Caco-2 (cell line): ENCODE measurements at regions of chr14 and their contacts with region 1.

Region 1: DNA sequence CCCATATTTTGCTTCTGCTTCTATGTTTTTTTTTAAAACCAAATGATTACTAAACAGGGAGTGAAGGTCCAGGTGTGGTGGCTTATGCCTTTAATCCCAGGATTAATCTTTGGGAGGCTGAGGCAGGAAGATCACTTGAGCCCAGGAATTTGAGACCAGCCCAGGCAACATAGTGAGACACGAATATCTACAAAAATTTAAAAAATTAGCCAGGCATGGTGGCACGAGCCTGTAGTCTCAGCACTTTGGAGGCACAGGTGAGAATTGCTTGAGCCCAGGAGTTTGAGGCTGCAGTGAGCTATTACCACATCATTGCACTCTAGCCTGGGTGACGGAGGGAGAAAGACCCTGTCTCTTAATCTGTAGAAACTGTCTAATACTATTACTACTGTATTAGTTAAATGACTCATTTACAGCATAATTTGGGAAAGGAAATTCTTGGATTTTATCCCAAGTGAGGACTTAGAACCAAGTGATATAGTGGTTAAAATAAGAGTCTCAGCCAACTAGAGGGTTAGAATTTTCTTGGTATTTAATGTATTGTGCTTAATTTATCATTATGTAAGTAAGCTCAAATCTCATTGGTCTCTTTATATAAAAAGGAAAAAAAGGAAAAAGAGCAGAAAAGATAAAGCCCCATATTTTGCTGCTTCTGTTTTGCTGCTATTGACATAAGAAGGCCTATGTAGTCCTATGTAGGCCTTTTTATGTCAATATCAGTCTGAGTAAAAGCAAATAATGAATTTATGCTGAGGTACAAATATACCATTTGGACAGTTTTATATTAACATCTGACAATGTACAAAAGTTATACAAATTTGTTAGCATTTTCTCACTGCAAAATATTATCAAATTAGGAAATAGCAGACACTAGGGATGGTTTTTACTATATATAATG is 163.4 kb downstream of the RAD51B start:
- DNase-seq: no peak
- H3K4me3 ChIP-seq: no peak overlapping the region
- H3K4me3 Mint-ChIP-seq: no peak overlapping the region
- H3K27ac Mint-ChIP-seq: no peak overlapping the region
- H3K4me1 ChIP-seq: peaks cover 11% of the 10 kb centered on the region
- H3K4me1 Mint-ChIP-seq: peaks cover 9% of the 10 kb centered on the region
- H3K27me3 ChIP-seq: no peaks in the 10 kb centered on the region
- H3K27me3 Mint-ChIP-seq: no peaks in the 10 kb centered on the region
- CTCF ChIP-seq: no peak

Region 2: GRCh38 chr14:67943947-67944346 is 39.0 kb before region 1 on chr14:
- CTCF ChIA-PET with region 1: no interaction called
- POLR2A ChIA-PET with region 1: no interaction called
- intact Hi-C with region 1: loop called (anchors 5 kb)
- DNase-seq: peak; percentile 74 to 75
- H3K4me3 ChIP-seq: no peak overlapping the region
- H3K4me3 Mint-ChIP-seq: no peak overlapping the region
- H3K27ac Mint-ChIP-seq: no peak overlapping the region
- H3K4me1 ChIP-seq: peaks cover 23% of the 10 kb centered on the region
- H3K4me1 Mint-ChIP-seq: peaks cover 27% of the 10 kb centered on the region
- H3K27me3 ChIP-seq: no peaks in the 10 kb centered on the region
- H3K27me3 Mint-ChIP-seq: no peaks in the 10 kb centered on the region
- CTCF ChIP-seq: peak; percentile 62 to 77

Region 3: DNA sequence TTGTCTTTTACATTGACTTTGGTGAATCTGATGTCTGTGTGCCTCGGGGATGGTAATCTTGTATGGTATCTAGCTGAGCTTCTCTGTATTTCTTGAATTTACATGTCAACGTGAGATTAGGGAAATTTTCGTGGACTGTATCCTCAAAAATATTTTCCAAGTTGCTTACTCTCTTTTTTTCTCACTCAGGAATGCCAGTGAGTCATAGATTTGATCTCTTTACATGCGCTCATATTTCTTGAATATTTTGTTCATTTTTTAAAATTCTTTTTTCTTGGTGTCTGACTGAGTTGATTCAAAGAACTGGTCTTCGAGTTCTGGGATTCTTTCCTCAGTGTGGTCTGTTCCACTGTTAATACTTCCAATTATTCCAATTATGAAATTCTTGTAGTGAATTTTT is 44.3 kb after region 1 on chr14:
- CTCF ChIA-PET with region 1: no interaction called
- POLR2A ChIA-PET with region 1: no interaction called
- intact Hi-C with region 1: no loop called
- DNase-seq: no peak
- H3K4me3 ChIP-seq: no peak overlapping the region
- H3K4me3 Mint-ChIP-seq: no peak overlapping the region
- H3K27ac Mint-ChIP-seq: no peak overlapping the region
- H3K4me1 ChIP-seq: no peaks in the 10 kb centered on the region
- H3K4me1 Mint-ChIP-seq: no peaks in the 10 kb centered on the region
- H3K27me3 ChIP-seq: no peaks in the 10 kb centered on the region
- H3K27me3 Mint-ChIP-seq: no peaks in the 10 kb centered on the region
- CTCF ChIP-seq: no peak